ENCODE measurements at regions of chr20 and their contacts with region 1.

Region 1: GRCh38 chr20:63537525-63538203 is 488 bp upstream of the PTK6 start:
- DNase-seq: peak; percentile 88 to 97 (median 92)
- ATAC-seq: peak; percentile 94
- H3K4me3 ChIP-seq: peak overlapping the region; percentile 68
- H3K4me3 Mint-ChIP-seq: peak overlapping the region; percentile 48 to 86 (median 75)
- H3K27ac ChIP-seq: peak overlapping the region; percentile 83
- H3K27ac Mint-ChIP-seq: peak overlapping the region; percentile 36 to 91 (median 78)
- H3K4me1 ChIP-seq: peaks cover 15 to 21% of the 10 kb centered on the region in 2 donors
- H3K4me1 Mint-ChIP-seq: peaks cover 0 to 11% (median 7%) of the 10 kb centered on the region in 7 donors
- H3K27me3 ChIP-seq: no peaks in the 10 kb centered on the region
- H3K27me3 Mint-ChIP-seq: no peaks in the 10 kb centered on the region

Region 2: DNA sequence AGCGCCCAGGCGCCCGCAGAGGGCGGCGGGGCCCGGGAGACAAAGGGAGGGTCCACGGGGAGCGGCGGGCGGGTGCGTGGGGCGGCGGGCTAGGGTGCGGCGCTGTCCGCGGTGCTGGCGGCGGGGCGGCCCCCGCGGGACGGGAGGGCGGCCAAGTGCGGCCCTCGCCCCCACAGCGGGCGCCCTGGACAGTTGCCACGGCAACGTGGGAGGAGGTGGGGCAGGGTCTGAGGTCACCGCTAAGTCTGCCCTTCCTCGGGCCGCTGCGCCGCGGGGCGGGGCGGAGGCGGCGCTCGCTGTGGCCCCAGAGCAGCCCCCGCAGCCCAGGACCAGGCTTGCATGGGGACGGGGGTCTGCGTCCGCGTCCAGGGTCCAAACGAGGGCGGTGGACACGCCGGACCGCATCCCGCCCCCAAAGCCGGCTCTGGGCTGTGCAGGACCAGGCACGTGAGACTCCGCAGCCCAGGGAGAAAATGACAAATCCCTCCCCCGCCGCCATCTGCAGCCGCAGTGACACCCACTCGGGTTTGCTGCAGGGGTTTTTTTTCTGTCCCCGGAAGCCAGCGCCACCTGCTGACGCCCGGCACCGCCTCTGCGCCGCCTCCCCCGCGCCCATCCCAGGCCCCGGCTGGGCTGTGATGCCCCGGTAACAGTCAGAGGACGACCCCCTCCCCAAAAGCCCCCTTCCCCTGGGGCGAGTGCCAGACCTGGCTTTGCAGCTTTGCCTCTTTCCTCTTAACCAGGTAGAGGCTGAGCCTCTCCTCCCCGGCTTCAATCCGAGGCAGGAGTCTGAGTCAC is 358.6 kb before region 1 on chr20:
- CTCF ChIA-PET with region 1: no interaction called
- POLR2A ChIA-PET with region 1: no interaction called
- intact Hi-C with region 1: no loop called
- DNase-seq: peak; percentile 48 to 71 (median 67)
- ATAC-seq: peak; percentile 80
- H3K4me3 ChIP-seq: peak overlapping the region; percentile 33
- H3K4me3 Mint-ChIP-seq: peak overlapping the region in 8 of 10 donors; percentile 23 to 78 (median 66)
- H3K27ac ChIP-seq: no peak overlapping the region
- H3K27ac Mint-ChIP-seq: peak overlapping the region in 2 of 9 donors; percentile 14 to 76
- H3K4me1 ChIP-seq: peaks cover 0 to 6% of the 10 kb centered on the region in 2 donors
- H3K4me1 Mint-ChIP-seq: peaks cover 0 to 17% (median 8%) of the 10 kb centered on the region in 7 donors
- H3K27me3 ChIP-seq: peaks cover 3 to 16% of the 10 kb centered on the region in 2 donors
- H3K27me3 Mint-ChIP-seq: peaks cover 10 to 50% (median 33%) of the 10 kb centered on the region in 5 donors

Region 3: DNA sequence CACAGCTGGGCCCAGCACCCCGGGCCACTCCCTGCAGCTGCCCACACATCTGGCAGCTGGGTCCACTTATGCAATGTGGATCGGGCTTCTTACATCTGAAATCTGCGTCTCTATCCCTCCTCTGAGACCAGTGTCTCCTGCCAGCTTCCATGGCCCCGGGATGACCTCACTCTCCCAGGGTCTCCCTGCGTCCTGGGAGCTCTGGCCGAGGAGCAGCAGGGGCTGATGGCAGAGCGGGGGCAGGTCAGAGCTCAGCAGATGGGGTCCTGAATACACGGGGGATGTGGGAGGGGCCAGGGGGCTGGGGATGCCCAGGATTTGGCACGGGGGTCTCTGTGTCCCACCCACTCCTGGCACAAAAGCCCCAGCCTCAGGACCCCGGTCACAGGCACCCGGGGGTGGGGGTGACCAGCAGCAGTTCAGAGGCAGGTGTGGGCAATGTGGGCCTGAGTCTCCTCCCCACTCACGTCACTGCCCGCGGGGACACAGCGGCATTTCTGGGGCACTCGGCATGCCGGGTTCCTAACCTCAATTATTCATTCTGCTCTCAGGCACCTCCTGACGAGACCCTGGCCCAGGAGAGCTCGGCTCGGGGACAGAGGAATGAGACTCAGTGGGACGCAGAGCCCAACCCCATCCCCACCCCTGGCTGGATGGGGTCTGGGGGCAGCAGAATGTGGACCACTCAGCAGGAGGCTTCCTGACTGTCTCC is 192.9 kb before region 1 on chr20:
- CTCF ChIA-PET with region 1: no interaction called
- POLR2A ChIA-PET with region 1: no interaction called
- intact Hi-C with region 1: no loop called
- DNase-seq: no peak
- ATAC-seq: no peak
- H3K4me3 ChIP-seq: no peak overlapping the region
- H3K4me3 Mint-ChIP-seq: no peak overlapping the region
- H3K27ac ChIP-seq: no peak overlapping the region
- H3K27ac Mint-ChIP-seq: no peak overlapping the region
- H3K4me1 ChIP-seq: no peaks in the 10 kb centered on the region
- H3K4me1 Mint-ChIP-seq: no peaks in the 10 kb centered on the region
- H3K27me3 ChIP-seq: no peaks in the 10 kb centered on the region
- H3K27me3 Mint-ChIP-seq: peaks cover 0 to 16% (median 10%) of the 10 kb centered on the region in 5 donors

Region 4: DNA sequence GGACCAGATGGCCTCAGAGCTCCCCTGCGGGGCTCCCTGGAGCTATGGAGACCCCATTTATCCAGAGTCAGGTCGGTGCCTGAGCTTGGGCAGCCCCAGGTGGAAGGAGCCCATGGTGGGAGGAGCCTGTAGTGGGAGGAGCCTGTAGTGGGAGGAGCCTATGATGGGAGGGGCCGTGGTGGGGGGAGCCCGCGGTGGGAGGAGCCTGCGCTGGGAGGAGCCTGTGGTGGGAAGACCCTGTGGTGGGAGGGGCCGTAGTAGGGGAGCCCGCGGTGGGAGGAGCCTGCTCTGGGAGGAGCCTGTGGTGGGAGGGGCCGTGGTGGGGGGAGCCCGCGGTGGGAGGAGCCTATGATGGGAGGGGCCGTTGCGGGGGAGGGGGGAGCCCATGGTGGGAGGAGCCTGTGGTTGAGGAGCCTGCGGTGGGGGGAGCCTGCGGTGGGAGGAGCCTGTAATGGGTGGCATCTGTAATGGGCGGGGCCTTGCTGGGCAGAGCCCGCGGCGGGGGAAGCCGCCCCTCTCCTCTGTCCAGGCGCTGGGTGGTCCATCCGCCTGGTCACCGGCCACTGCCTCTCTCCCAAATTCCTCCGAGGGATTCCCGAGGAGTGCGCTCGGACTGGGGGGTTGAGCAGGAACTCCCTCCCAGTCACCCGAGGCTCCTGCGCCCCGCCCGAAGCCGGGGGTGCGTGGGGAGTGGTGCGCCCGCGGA is 15.7 kb after region 1 on chr20:
- CTCF ChIA-PET with region 1: interaction called, 13 read pairs
- POLR2A ChIA-PET with region 1: interaction called, 17 read pairs
- intact Hi-C with region 1: loop called (anchors 1 kb)
- DNase-seq: peak; percentile 81 to 96 (median 88)
- ATAC-seq: peak; percentile 92
- H3K4me3 ChIP-seq: peak overlapping the region; percentile 68
- H3K4me3 Mint-ChIP-seq: peak overlapping the region; percentile 70 to 85 (median 76)
- H3K27ac ChIP-seq: peak overlapping the region; percentile 70
- H3K27ac Mint-ChIP-seq: peak overlapping the region; percentile 62 to 97 (median 92)
- H3K4me1 ChIP-seq: peaks cover 13 to 21% of the 10 kb centered on the region in 2 donors
- H3K4me1 Mint-ChIP-seq: peaks cover 9 to 18% (median 13%) of the 10 kb centered on the region in 7 donors
- H3K27me3 ChIP-seq: no peaks in the 10 kb centered on the region
- H3K27me3 Mint-ChIP-seq: peaks cover 0 to 19% (median 5%) of the 10 kb centered on the region in 5 donors

Region 5: DNA sequence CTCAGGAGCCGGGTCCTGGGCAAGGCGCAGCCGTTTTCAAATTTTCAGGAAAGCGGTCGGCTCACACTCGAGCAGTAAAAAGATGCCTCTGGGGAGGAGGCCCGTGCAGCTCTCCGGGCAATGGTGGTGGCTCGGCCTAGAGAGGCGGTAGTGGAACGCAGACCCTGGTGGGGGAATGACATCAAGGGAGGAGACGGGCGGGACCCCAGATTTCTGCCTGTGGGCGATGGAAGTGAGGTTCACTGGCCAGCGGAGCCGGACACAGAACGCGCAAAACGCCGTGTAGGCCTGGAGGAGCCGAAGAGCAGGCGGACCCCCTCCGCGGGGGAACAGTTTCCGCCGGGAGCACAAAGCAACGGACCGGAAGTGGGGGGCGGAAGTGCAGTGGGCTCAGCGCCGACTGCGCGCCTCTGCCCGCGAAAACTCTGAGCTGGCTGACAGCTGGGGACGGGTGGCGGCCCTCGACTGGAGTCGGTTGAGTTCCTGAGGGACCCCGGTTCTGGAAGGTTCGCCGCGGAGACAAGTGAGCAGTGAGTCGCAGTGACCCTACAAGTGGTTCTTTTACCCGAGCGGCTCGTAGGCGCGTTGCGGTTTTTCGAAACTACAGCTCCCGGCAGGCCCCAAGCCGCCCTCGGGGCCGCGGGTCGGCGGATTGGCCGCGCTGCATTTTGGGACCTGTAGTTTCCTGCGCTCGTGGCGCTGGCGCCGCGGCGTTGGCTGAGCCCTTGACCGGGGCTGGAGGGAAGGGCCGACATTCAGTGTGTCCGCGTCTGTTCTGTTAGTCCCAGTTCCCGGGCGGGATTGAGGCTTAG is 120.5 kb after region 1 on chr20 and contains the start of gene RTEL1:
- CTCF ChIA-PET with region 1: interaction called, 3 read pairs
- POLR2A ChIA-PET with region 1: interaction called, 11 read pairs
- intact Hi-C with region 1: no loop called
- DNase-seq: peak; percentile 79 to 99 (median 89)
- ATAC-seq: peak; percentile 90
- H3K4me3 ChIP-seq: peak within 1 kb of the TSS; percentile 100
- H3K4me3 Mint-ChIP-seq: peak within 1 kb of the TSS; percentile 86 to 97 (median 94)
- H3K27ac ChIP-seq: peak within 1 kb of the TSS; percentile 83
- H3K27ac Mint-ChIP-seq: peak within 1 kb of the TSS; percentile 93 to 97 (median 95)
- H3K4me1 ChIP-seq: peaks cover 18 to 20% of the 10 kb centered on the region in 2 donors
- H3K4me1 Mint-ChIP-seq: peaks cover 14 to 57% (median 36%) of the 10 kb centered on the region in 7 donors
- H3K27me3 ChIP-seq: no peaks in the 10 kb centered on the region
- H3K27me3 Mint-ChIP-seq: peaks cover 0 to 2% (median 0%) of the 10 kb centered on the region in 5 donors
- total RNA-seq, gene RTEL1: 28.4 to 47.2 (median 32.4) TPM

Region 6: DNA sequence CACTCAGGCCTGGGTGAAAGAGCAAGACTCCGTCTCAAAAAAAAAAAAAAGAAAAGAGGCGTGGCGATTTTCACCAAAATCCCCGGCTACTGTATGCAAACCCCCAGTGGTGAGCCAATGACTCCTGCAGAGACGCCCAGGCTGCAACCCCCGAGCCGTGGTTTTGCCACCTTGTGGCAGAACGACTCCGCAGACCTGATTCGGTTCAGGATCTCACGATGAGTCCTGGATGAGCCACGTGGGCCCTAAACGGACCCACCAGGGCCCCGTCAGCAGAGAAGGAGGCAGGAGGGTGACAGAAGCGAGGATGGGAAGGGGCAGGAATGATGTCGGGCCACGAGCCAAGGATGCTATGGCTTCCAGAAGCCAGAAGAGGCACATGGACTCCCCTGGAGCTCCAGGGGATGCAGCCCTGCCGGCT is 244.4 kb after region 1 on chr20:
- CTCF ChIA-PET with region 1: interaction called, 6 read pairs
- POLR2A ChIA-PET with region 1: no interaction called
- intact Hi-C with region 1: loop called in 1 of 2 experiments (anchors 1 kb)
- DNase-seq: peak in 6 of 9 donors; percentile 60 to 74 (median 64)
- ATAC-seq: peak; percentile 95
- H3K4me3 ChIP-seq: no peak overlapping the region
- H3K4me3 Mint-ChIP-seq: peak overlapping the region in 8 of 10 donors; percentile 31 to 78 (median 48)
- H3K27ac ChIP-seq: no peak overlapping the region
- H3K27ac Mint-ChIP-seq: peak overlapping the region in 6 of 9 donors; percentile 55 to 92 (median 64)
- H3K4me1 ChIP-seq: peaks cover 8 to 9% of the 10 kb centered on the region in 2 donors
- H3K4me1 Mint-ChIP-seq: peaks cover 9 to 24% (median 18%) of the 10 kb centered on the region in 7 donors
- H3K27me3 ChIP-seq: no peaks in the 10 kb centered on the region
- H3K27me3 Mint-ChIP-seq: no peaks in the 10 kb centered on the region

Region 7: GRCh38 chr20:63955827-63956663 is 418.4 kb after region 1 on chr20 and contains the start of gene UCKL1:
- CTCF ChIA-PET with region 1: no interaction called
- POLR2A ChIA-PET with region 1: no interaction called
- intact Hi-C with region 1: loop called (anchors 1 to 5 kb)
- DNase-seq: peak; percentile 82 to 95 (median 93)
- ATAC-seq: peak; percentile 91
- H3K4me3 ChIP-seq: peak within 1 kb of the TSS; percentile 87
- H3K4me3 Mint-ChIP-seq: peak within 1 kb of the TSS; percentile 79 to 87 (median 86)
- H3K27ac ChIP-seq: peak within 1 kb of the TSS; percentile 93
- H3K27ac Mint-ChIP-seq: peak within 1 kb of the TSS; percentile 32 to 89 (median 80)
- H3K4me1 ChIP-seq: peaks cover 18 to 26% of the 10 kb centered on the region in 2 donors
- H3K4me1 Mint-ChIP-seq: peaks cover 19 to 37% (median 27%) of the 10 kb centered on the region in 7 donors
- H3K27me3 ChIP-seq: no peaks in the 10 kb centered on the region
- H3K27me3 Mint-ChIP-seq: no peaks in the 10 kb centered on the region
- total RNA-seq, gene UCKL1: 42.0 to 49.0 (median 46.6) TPM

Region 8: GRCh38 chr20:64062596-64063388 is 525.1 kb after region 1 on chr20 and contains the start of gene TCEA2:
- CTCF ChIA-PET with region 1: no interaction called
- POLR2A ChIA-PET with region 1: interaction called, 3 read pairs
- intact Hi-C with region 1: loop called (anchors 5 to 10 kb)
- DNase-seq: peak; percentile 85 to 95 (median 90)
- ATAC-seq: peak; percentile 97
- H3K4me3 ChIP-seq: peak within 1 kb of the TSS; percentile 56
- H3K4me3 Mint-ChIP-seq: peak within 1 kb of the TSS; percentile 83 to 95 (median 88)
- H3K27ac ChIP-seq: peak within 1 kb of the TSS; percentile 74
- H3K27ac Mint-ChIP-seq: peak within 1 kb of the TSS; percentile 69 to 95 (median 79)
- H3K4me1 ChIP-seq: peaks cover 23 to 40% of the 10 kb centered on the region in 2 donors
- H3K4me1 Mint-ChIP-seq: peaks cover 30 to 54% (median 37%) of the 10 kb centered on the region in 7 donors
- H3K27me3 ChIP-seq: no peaks in the 10 kb centered on the region
- H3K27me3 Mint-ChIP-seq: no peaks in the 10 kb centered on the region
- total RNA-seq, gene TCEA2: 35.5 to 73.2 (median 47.3) TPM

Measured in naive thymus-derived CD4-positive, alpha-beta T cell (primary cell).